OCI-LY7 (cell line): ENCODE measurements at regions of chr22 and their contacts with region 1.

Region 1: DNA sequence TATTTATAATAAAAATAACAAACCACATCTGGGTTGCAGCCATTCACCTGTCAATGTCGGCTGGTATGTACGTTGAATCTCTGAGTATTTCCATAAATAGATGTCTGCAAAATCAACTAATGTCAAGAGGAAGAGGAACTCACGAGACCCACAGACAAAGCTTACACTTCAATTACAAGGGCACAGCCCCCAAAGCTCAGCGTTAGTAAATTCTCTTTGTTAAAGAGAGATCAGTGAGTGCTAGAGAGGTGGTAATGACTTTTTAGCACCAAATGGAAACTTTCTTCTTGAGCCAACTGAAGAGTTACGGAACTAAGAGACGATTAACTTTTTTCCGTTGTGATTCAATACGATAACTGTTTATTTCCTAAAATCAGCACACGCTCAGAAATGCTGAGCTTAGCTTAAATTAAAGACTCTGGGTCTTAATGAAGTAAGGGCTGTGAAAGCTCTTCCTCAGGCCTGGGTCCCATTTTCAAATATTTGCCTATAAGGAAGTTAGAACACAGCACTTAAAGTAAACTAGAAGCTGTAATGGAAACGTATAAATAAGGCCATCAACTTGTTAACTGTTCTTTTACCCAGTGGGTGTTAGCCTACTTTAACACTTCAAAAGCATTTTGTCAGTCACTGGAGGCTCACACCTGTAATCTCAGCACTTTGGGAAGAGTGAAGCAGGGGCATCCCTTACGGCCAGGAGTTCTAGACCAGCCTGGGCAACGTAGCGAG is 22.8 kb upstream of the TFIP11 start:
- DNase-seq: peak; percentile 88
- H3K4me3 ChIP-seq: peak overlapping the region; percentile 60
- H3K27ac ChIP-seq: peak overlapping the region; percentile 98
- H3K4me1 ChIP-seq: peaks cover 51% of the 10 kb centered on the region
- CTCF ChIP-seq: no peak

Region 2: GRCh38 chr22:26245001-26245400 is 290.0 kb before region 1 on chr22:
- CTCF ChIA-PET with region 1: no interaction called
- POLR2A ChIA-PET with region 1: no interaction called
- intact Hi-C with region 1: no loop called
- DNase-seq: no peak
- H3K4me3 ChIP-seq: no peak overlapping the region
- H3K27ac ChIP-seq: no peak overlapping the region
- H3K4me1 ChIP-seq: no peaks in the 10 kb centered on the region
- CTCF ChIP-seq: no peak

Region 3: GRCh38 chr22:26502688-26503561 is 32.1 kb before region 1 on chr22:
- CTCF ChIA-PET with region 1: interaction called, 3 read pairs
- POLR2A ChIA-PET with region 1: interaction called, 13 read pairs
- intact Hi-C with region 1: no loop called
- DNase-seq: peak; percentile 89
- H3K4me3 ChIP-seq: no peak overlapping the region
- H3K27ac ChIP-seq: peak overlapping the region; percentile 58
- H3K4me1 ChIP-seq: peaks cover 23% of the 10 kb centered on the region
- CTCF ChIP-seq: peak; percentile 95

Region 4: GRCh38 chr22:26546282-26546681 is 11.2 kb after region 1 on chr22:
- CTCF ChIA-PET with region 1: no interaction called
- POLR2A ChIA-PET with region 1: interaction called, 15 read pairs
- intact Hi-C with region 1: no loop called
- DNase-seq: no peak
- H3K4me3 ChIP-seq: no peak overlapping the region
- H3K27ac ChIP-seq: no peak overlapping the region
- H3K4me1 ChIP-seq: peaks cover 27% of the 10 kb centered on the region
- CTCF ChIP-seq: no peak

Region 5: GRCh38 chr22:26579331-26579886 is 44.4 kb after region 1 on chr22:
- CTCF ChIA-PET with region 1: no interaction called
- POLR2A ChIA-PET with region 1: interaction called, 5 read pairs
- intact Hi-C with region 1: loop called (anchors 5 kb)
- DNase-seq: peak; percentile 73
- H3K4me3 ChIP-seq: peak overlapping the region; percentile 41
- H3K27ac ChIP-seq: peak overlapping the region; percentile 73
- H3K4me1 ChIP-seq: peaks cover 36% of the 10 kb centered on the region
- CTCF ChIP-seq: no peak

Region 6: DNA sequence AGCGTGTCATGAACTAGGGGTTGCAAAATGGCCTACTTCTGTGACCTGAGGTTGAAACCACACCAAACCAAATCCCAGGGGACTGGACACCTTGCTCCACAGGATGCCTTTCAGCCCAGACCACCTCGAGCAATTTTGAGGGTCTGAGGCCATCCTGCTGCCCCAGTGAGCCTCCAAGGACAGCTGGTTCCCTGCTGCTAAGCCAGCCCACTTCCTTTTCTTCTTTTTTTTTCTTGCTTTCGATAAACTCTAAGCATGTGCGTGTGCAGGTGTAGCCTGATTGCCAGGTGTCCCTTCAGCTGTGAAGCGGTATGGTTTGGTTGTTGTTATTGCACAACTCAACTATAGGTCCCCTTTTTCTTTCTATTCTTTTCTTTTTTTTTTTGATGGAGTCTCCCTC is 80.1 kb after region 1 on chr22:
- CTCF ChIA-PET with region 1: no interaction called
- POLR2A ChIA-PET with region 1: no interaction called
- intact Hi-C with region 1: loop called (anchors 1 kb)
- DNase-seq: peak; percentile 92
- H3K4me3 ChIP-seq: no peak overlapping the region
- H3K27ac ChIP-seq: peak overlapping the region; percentile 42
- H3K4me1 ChIP-seq: peaks cover 53% of the 10 kb centered on the region
- CTCF ChIP-seq: no peak